Activated CD4-positive, alpha-beta memory T cell treated with anti-CD3 and anti-CD28 coated beads for 36 hours (primary cell): ENCODE measurements at regions of chrX and their contacts with region 1.

Region 1: DNA sequence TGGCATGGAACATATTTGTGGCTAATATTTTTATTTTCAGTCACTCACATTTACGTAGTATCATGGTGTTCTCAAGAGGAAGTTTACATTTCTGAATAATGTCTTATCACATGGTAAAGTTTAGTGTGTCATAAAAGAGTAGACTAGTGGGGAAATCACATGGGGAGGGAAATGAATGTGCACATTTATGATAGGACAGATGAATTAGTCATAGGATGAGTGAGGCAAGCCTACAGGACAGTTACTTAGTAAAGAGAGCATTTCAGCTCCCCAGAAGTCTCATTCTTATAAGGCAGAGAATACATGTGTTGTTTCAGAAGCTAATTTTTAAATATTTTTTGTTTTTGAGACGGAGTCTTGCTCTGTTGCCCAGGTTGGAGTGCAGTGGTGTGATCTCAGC is 6.2 kb downstream of the GK start:
- DNase-seq: no peak
- H3K4me3 Mint-ChIP-seq: peak overlapping the region; percentile 38
- H3K27ac Mint-ChIP-seq: peak overlapping the region; percentile 96
- H3K4me1 Mint-ChIP-seq: peaks cover 46% of the 10 kb centered on the region
- H3K27me3 Mint-ChIP-seq: no peaks in the 10 kb centered on the region

Region 2: DNA sequence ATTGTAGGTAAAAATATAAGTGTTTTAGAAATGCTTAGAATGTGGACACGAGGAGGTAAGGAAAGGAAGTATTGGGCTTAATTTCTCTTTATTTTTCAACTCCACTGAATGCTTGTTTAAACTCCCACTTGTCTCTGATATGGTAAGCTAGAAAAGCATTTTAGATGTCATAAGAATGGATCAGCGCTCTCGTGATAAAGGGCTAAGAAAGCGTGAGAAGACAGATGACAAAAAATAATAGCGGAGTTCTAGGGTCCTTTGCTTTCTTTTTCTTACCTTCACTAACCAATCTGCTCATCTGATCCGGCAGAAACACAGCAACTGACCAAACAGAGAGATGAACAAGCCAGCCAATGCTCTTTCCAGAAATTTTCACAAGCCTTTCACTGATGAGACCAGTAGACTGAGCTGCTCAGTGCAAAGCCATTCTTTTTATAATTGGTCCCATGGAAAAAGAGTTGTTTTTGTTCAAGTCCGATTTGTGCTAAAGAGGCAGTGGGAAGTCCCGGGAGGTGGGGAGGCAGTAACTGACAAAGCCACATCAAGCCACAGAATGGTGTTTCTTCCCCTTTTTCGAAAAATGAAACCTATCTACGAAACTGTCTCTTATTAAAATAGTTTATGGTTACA is 81.9 kb before region 1 on chrX and contains the start of gene TASL:
- CTCF ChIA-PET with region 1: no interaction called
- POLR2A ChIA-PET with region 1: no interaction called
- intact Hi-C with region 1: loop called (anchors 2 kb)
- DNase-seq: peak; percentile 40
- H3K4me3 Mint-ChIP-seq: peak within 1 kb of the TSS; percentile 81
- H3K27ac Mint-ChIP-seq: peak within 1 kb of the TSS; percentile 88
- H3K4me1 Mint-ChIP-seq: peaks cover 20% of the 10 kb centered on the region
- H3K27me3 Mint-ChIP-seq: no peaks in the 10 kb centered on the region
- total RNA-seq, gene TASL: 1.1 to 1.6 TPM

Region 3: GRCh38 chrX:30643313-30643821 is 16.1 kb before region 1 on chrX:
- CTCF ChIA-PET with region 1: interaction called, 4 read pairs
- POLR2A ChIA-PET with region 1: interaction called, 31 read pairs
- intact Hi-C with region 1: loop called (anchors 1 kb)
- DNase-seq: no peak
- H3K4me3 Mint-ChIP-seq: no peak overlapping the region
- H3K27ac Mint-ChIP-seq: peak overlapping the region; percentile 79
- H3K4me1 Mint-ChIP-seq: peaks cover 26% of the 10 kb centered on the region
- H3K27me3 Mint-ChIP-seq: no peaks in the 10 kb centered on the region

Region 4: GRCh38 chrX:30690330-30690729 is 30.9 kb after region 1 on chrX:
- CTCF ChIA-PET with region 1: no interaction called
- POLR2A ChIA-PET with region 1: no interaction called
- intact Hi-C with region 1: no loop called
- DNase-seq: no peak
- H3K4me3 Mint-ChIP-seq: no peak overlapping the region
- H3K27ac Mint-ChIP-seq: no peak overlapping the region
- H3K4me1 Mint-ChIP-seq: no peaks in the 10 kb centered on the region
- H3K27me3 Mint-ChIP-seq: no peaks in the 10 kb centered on the region

Region 5: DNA sequence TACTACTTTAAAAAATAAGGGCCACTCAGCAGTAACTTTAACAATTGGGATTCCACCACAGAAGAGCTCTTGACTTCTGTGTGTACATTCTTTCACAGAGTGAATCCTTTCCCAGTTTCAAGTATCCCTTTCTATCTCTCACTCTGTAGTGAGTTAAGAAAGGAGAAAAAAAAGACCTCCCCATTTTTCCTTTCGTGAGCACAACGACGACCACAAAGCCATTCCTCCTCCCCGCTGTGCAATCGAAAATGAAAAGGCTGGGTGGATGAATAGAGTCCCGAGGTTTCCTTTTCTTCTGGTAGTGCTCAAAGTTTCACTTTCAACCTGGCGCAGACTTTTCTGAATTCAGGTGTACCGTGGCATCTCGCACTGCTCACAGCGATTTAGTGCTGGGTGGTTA is 171.7 kb after region 1 on chrX:
- CTCF ChIA-PET with region 1: no interaction called
- POLR2A ChIA-PET with region 1: no interaction called
- intact Hi-C with region 1: loop called (anchors 5 kb)
- DNase-seq: peak; percentile 58
- H3K4me3 Mint-ChIP-seq: no peak overlapping the region
- H3K27ac Mint-ChIP-seq: no peak overlapping the region
- H3K4me1 Mint-ChIP-seq: peaks cover 29% of the 10 kb centered on the region
- H3K27me3 Mint-ChIP-seq: no peaks in the 10 kb centered on the region